Dorsolateral prefrontal cortex (tissue), 120 donors: ENCODE measurements at regions of chr1 and their contacts with region 1.

Region 1: GRCh38 chr1:234212764-234213657 is 160.2 kb upstream of the COA6 start:
- DNase-seq: peak in 2 of 10 donors; percentile 51 to 53
- H3K4me3 ChIP-seq: peak overlapping the region in 50 of 59 donors; percentile 49 to 80 (median 70)
- H3K27ac ChIP-seq: peak overlapping the region in 30 of 59 donors; percentile 2 to 90 (median 75)
- H3K27me3 ChIP-seq: peaks cover 0 to 13% (median 0%) of the 10 kb centered on the region in 45 donors
- CTCF ChIP-seq: peak; percentile 42 to 77 (median 63)

Region 2: DNA sequence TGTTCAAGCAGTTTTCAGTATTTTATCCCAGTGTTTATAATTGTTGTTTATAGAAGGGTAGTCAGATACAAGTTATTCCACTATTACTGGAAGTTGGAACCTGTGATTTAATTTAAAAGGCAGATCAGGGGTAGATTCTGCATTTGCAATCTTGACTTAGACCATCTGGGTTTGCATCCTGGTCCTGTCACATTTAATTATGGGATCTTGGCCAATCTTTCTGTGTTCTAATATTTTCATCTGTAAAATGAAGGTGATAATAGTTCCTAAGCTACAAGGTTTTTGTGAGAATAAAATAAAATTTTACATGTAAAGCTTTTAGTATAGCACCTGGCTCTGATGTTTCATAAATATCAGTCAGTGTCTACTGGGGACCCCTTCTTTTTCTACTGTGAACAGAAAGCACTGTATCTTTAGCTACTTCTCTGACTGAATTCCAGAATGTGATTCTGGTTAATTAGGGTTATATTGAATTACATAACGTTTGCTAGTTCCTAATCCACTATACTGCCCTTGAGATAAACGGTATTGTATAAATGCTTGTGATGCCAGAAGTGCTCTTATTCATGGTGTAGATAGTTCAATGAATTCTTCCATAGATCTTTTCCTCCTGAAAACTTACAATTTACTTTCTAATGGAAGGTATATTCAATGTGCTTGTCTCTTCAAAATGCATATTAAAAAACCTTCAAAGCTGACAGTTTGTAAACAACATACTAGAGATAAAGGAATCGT is 468.1 kb before region 1 on chr1:
- intact Hi-C with region 1: no loop called
- DNase-seq: no peak
- H3K4me3 ChIP-seq: no peak overlapping the region
- H3K27ac ChIP-seq: no peak overlapping the region
- H3K27me3 ChIP-seq: no peaks in the 10 kb centered on the region
- CTCF ChIP-seq: no peak

Region 3: DNA sequence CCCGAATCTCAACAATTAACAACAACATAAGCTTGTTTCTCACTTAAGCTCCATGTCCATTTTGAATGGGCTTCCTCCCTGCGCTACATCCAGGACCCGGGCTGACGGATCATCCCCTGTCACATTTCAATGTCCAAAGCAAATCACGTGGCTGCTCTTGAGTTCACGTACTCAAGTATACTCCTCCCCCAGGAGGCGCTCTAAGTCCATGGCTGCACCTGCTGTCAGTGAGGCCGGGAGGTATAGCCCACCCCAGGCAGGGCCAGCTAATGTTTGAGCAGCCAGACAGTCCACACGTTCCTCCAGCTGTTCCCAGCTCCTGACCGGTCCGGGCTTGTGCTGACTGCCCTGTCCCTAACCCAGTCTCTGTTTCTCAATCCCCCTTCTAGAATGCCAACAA is 87.7 kb before region 1 on chr1:
- intact Hi-C with region 1: no loop called
- DNase-seq: no peak
- H3K4me3 ChIP-seq: no peak overlapping the region
- H3K27ac ChIP-seq: no peak overlapping the region
- H3K27me3 ChIP-seq: peaks cover 0 to 28% (median 0%) of the 10 kb centered on the region in 45 donors
- CTCF ChIP-seq: peak in 2 of 56 donors; percentile 17 to 20

Region 4: GRCh38 chr1:234281826-234282489 is 68.9 kb after region 1 on chr1:
- intact Hi-C with region 1: loop called in 1 of 2 experiments (anchors 5 kb)
- DNase-seq: peak; percentile 35 to 86 (median 74)
- H3K4me3 ChIP-seq: peak overlapping the region in 22 of 59 donors; percentile 0 to 51 (median 20)
- H3K27ac ChIP-seq: peak overlapping the region in 58 of 59 donors; percentile 49 to 91 (median 82)
- H3K27me3 ChIP-seq: no peaks in the 10 kb centered on the region
- CTCF ChIP-seq: peak in 2 of 56 donors; percentile 11 to 20

Region 5: GRCh38 chr1:234309598-234310459 is 96.8 kb after region 1 on chr1:
- intact Hi-C with region 1: loop called (anchors 2 to 5 kb)
- DNase-seq: peak in 7 of 10 donors; percentile 37 to 69 (median 59)
- H3K4me3 ChIP-seq: peak overlapping the region in 2 of 59 donors; percentile 2 to 26
- H3K27ac ChIP-seq: peak overlapping the region in 44 of 59 donors; percentile 2 to 79 (median 59)
- H3K27me3 ChIP-seq: no peaks in the 10 kb centered on the region
- CTCF ChIP-seq: peak; percentile 58 to 90 (median 83)